Activated B cell treated with CpG ODN at 0.5 μM for 24 hours (primary cell): ENCODE measurements at regions of chr13 and their contacts with region 1.

Region 1: GRCh38 chr13:110715395-110716235 is 2.1 kb downstream of the ING1 start:
- DNase-seq: peak; percentile 88
- ATAC-seq: peak; percentile 62
- H3K4me3 Mint-ChIP-seq: peak overlapping the region; percentile 96
- H3K27ac Mint-ChIP-seq: peak overlapping the region; percentile 97
- H3K4me1 Mint-ChIP-seq: peaks cover 39% of the 10 kb centered on the region
- H3K27me3 Mint-ChIP-seq: no peaks in the 10 kb centered on the region
- CTCF ChIP-seq: no peak

Region 2: GRCh38 chr13:110455941-110456340 is 259.7 kb before region 1 on chr13:
- CTCF ChIA-PET with region 1: no interaction called
- POLR2A ChIA-PET with region 1: interaction called, 4 read pairs
- intact Hi-C with region 1: loop called (anchors 5 kb)
- DNase-seq: peak; percentile 50
- ATAC-seq: peak; percentile 96
- H3K4me3 Mint-ChIP-seq: peak overlapping the region; percentile 72
- H3K27ac Mint-ChIP-seq: no peak overlapping the region
- H3K4me1 Mint-ChIP-seq: peaks cover 15% of the 10 kb centered on the region
- H3K27me3 Mint-ChIP-seq: peaks cover 2% of the 10 kb centered on the region
- CTCF ChIP-seq: peak; percentile 40

Region 3: GRCh38 chr13:110615322-110616102 is 100.1 kb before region 1 on chr13 and contains the start of gene NAXD:
- CTCF ChIA-PET with region 1: no interaction called
- POLR2A ChIA-PET with region 1: interaction called, 31 read pairs
- intact Hi-C with region 1: loop called (anchors 1 kb)
- DNase-seq: peak; percentile 66
- ATAC-seq: peak; percentile 82
- H3K4me3 Mint-ChIP-seq: peak within 1 kb of the TSS; percentile 94
- H3K27ac Mint-ChIP-seq: peak within 1 kb of the TSS; percentile 89
- H3K4me1 Mint-ChIP-seq: peaks cover 37% of the 10 kb centered on the region
- H3K27me3 Mint-ChIP-seq: no peaks in the 10 kb centered on the region
- CTCF ChIP-seq: no peak
- total RNA-seq, gene NAXD: 31.1 and 32.7 TPM in 2 replicates

Region 4: GRCh38 chr13:110665491-110666254 is 49.9 kb before region 1 on chr13:
- CTCF ChIA-PET with region 1: no interaction called
- POLR2A ChIA-PET with region 1: interaction called, 11 read pairs
- intact Hi-C with region 1: no loop called
- DNase-seq: no peak
- ATAC-seq: peak; percentile 96
- H3K4me3 Mint-ChIP-seq: peak overlapping the region; percentile 67
- H3K27ac Mint-ChIP-seq: peak overlapping the region; percentile 80
- H3K4me1 Mint-ChIP-seq: peaks cover 69% of the 10 kb centered on the region
- H3K27me3 Mint-ChIP-seq: no peaks in the 10 kb centered on the region
- CTCF ChIP-seq: no peak

Region 5: GRCh38 chr13:110819203-110820014 is 103.8 kb after region 1 on chr13:
- CTCF ChIA-PET with region 1: interaction called, 3 read pairs
- POLR2A ChIA-PET with region 1: interaction called, 3 read pairs
- intact Hi-C with region 1: loop called (anchors 1 kb)
- DNase-seq: peak; percentile 64
- ATAC-seq: peak; percentile 92
- H3K4me3 Mint-ChIP-seq: no peak overlapping the region
- H3K27ac Mint-ChIP-seq: no peak overlapping the region
- H3K4me1 Mint-ChIP-seq: peaks cover 3% of the 10 kb centered on the region
- H3K27me3 Mint-ChIP-seq: peaks cover 2% of the 10 kb centered on the region
- CTCF ChIP-seq: peak; percentile 67

Region 6: DNA sequence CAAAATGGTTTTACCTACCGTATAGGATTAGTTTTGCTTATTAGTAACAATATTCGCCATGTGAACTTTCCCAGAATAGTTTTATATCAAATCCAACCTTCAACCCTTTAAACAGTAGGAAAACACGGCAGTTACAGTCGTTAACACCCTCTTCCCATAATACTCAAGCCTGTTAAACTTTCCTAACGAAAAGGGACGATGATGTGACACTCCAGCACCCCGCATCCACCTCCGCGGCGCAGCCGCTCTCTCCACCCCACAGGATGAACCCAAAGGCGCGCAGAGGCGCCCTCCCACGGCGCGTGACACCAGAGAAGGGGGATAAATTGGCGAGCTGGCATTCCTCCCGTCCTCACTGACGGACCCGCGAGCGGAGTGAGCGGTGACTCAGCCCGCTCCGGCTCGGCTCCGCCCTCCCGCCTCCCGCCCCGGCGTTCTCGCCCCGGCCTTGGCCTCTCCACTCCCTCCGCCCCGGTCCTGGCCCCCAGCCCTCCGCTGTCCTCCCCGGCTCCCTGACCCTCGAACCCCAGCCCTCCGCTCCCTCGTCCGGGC is 1871.7 kb after region 1 on chr13:
- CTCF ChIA-PET with region 1: no interaction called
- POLR2A ChIA-PET with region 1: no interaction called
- intact Hi-C with region 1: loop called (anchors 10 kb)
- DNase-seq: peak; percentile 58
- ATAC-seq: peak; percentile 59
- H3K4me3 Mint-ChIP-seq: peak overlapping the region; percentile 94
- H3K27ac Mint-ChIP-seq: peak overlapping the region; percentile 84
- H3K4me1 Mint-ChIP-seq: peaks cover 44% of the 10 kb centered on the region
- H3K27me3 Mint-ChIP-seq: peaks cover 4% of the 10 kb centered on the region
- CTCF ChIP-seq: no peak